IMR-90 (cell line): ENCODE measurements at regions of chr1 and their contacts with region 1.

Region 1: DNA sequence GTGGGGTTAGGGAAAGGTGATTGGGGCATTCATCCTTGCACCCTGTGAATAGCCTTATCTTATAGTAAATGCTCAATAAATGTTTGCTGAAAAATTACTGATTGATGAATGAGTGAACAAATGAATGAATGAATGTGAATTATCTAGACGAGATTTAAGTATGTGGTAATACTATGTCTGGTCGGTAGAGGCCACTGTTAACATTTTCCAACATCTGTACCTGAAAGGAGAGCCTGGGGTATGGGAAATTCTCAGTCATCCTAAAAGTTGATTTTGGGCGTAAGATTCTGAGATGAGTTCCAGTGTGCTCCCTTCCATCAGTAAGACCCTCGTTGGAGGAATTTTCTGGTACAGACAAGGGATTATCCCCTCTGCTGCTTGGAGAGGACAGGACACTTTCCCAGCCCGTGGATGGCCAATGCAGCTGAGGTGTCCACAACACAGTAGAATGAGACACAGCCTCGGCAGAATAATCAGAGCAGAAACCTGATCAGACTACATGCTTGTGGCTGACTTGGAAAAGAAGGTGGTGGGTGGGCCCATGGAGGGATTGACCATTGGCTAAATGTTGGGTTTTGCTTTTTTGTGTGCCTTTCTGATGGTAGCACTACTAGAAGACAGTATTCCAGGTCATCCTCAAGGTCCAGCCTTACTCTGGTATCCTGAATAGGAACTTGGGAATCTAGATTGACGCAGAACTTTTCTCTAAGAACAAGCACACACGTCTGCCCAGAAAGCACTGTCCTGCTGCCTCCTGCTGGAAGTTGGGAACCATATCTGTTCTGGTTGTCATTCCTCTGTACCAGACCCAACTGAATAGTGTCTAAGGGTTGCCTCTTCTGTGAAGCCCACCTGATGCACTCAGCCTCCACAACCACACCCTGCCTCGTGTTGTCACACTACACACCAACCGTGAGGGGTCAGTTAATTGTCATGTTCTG is 262.0 kb downstream of the TNR start:
- DNase-seq: peak; percentile 16
- ATAC-seq: peak; percentile 67
- H3K4me3 ChIP-seq: no peak overlapping the region
- H3K27ac ChIP-seq: no peak overlapping the region
- H3K4me1 ChIP-seq: no peaks in the 10 kb centered on the region
- H3K27me3 ChIP-seq: no peaks in the 10 kb centered on the region
- CTCF ChIP-seq: peak; percentile 50
- POLR2A ChIP-seq: no peak
- RAD21 ChIP-seq: peak; percentile 44; the same call in 1 of the 2 replicates

Region 2: GRCh38 chr1:175887981-175888433 is 406.6 kb after region 1 on chr1:
- CTCF ChIA-PET with region 1: no interaction called
- POLR2A ChIA-PET with region 1: no interaction called
- dilution Hi-C with region 1: no loop called
- in situ Hi-C with region 1: no loop called
- intact Hi-C with region 1: loop called (anchors 1 kb)
- DNase-seq: peak; percentile 36
- ATAC-seq: peak; percentile 80
- H3K4me3 ChIP-seq: no peak overlapping the region
- H3K27ac ChIP-seq: no peak overlapping the region
- H3K4me1 ChIP-seq: peaks cover 4% of the 10 kb centered on the region
- H3K27me3 ChIP-seq: no peaks in the 10 kb centered on the region
- CTCF ChIP-seq: peak; percentile 70
- POLR2A ChIP-seq: no peak
- RAD21 ChIP-seq: peak; percentile 63

Region 3: GRCh38 chr1:176073524-176074157 is 592.2 kb after region 1 on chr1:
- CTCF ChIA-PET with region 1: no interaction called
- POLR2A ChIA-PET with region 1: no interaction called
- dilution Hi-C with region 1: no loop called
- in situ Hi-C with region 1: loop called (anchors 25 kb)
- intact Hi-C with region 1: no loop called
- DNase-seq: peak; percentile 72
- ATAC-seq: peak; percentile 61
- H3K4me3 ChIP-seq: no peak overlapping the region
- H3K27ac ChIP-seq: no peak overlapping the region
- H3K4me1 ChIP-seq: peaks cover 1% of the 10 kb centered on the region; the same call in 1 of the 2 replicates
- H3K27me3 ChIP-seq: no peaks in the 10 kb centered on the region
- CTCF ChIP-seq: peak; percentile 66
- POLR2A ChIP-seq: no peak
- RAD21 ChIP-seq: peak; percentile 62

Region 4: GRCh38 chr1:176691251-176692228 is 1210.1 kb after region 1 on chr1:
- CTCF ChIA-PET with region 1: no interaction called
- POLR2A ChIA-PET with region 1: no interaction called
- dilution Hi-C with region 1: no loop called
- in situ Hi-C with region 1: no loop called
- intact Hi-C with region 1: loop called (anchors 5 kb)
- DNase-seq: peak; percentile 43
- ATAC-seq: peak; percentile 56
- H3K4me3 ChIP-seq: no peak overlapping the region
- H3K27ac ChIP-seq: no peak overlapping the region
- H3K4me1 ChIP-seq: no peaks in the 10 kb centered on the region
- H3K27me3 ChIP-seq: no peaks in the 10 kb centered on the region
- CTCF ChIP-seq: peak; percentile 58
- POLR2A ChIP-seq: no peak
- RAD21 ChIP-seq: peak; percentile 50